ENCODE measurements at regions of chr2 and their contacts with region 1.

Region 1: DNA sequence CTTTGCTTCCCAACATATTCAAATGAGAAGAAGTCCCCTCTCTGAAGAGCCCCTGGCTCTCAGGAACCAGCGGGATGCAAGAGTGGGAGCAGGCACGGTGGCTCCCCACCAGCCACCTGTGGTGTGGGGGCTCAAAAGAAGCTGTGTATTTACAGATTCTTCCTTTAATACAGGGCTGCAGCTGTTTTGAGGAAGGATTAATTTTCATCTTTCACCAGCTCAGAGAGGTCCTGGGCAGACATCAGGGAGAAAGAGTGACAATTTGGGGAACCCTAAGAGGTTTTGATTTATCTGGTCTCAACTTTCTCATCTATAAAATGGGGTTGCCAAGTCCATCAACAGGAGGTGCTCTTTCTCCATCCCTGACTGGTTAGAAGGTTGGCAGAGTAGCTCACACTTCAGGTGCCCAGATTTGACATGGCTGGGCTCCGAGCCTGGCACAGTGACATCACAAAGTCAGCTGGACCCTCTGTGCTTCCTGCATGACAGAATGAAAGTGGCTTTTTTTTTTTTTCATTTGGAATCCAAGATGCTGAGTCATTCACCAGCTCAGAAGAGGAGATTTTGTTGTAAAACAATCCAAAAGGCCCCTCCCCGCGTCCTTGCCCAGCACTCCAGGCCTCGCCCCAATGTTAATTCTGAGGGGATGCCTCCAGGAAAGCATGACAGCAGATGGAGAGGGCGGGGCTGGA is 15.5 kb upstream of the SIX2 start:
- DNase-seq: peak; percentile 90 to 91
- ATAC-seq: peak; percentile 70
- H3K4me3 ChIP-seq: no peak overlapping the region
- H3K27ac ChIP-seq: no peak overlapping the region
- H3K4me1 ChIP-seq: no peaks in the 10 kb centered on the region
- H3K27me3 ChIP-seq: no peaks in the 10 kb centered on the region

Region 2: GRCh38 chr2:45128580-45128997 is 103.8 kb after region 1 on chr2:
- intact Hi-C with region 1: loop called in 1 of 2 experiments (anchors 5 kb)
- DNase-seq: peak in 1 of 2 donors; percentile 66
- ATAC-seq: no peak
- H3K4me3 ChIP-seq: no peak overlapping the region
- H3K27ac ChIP-seq: no peak overlapping the region
- H3K4me1 ChIP-seq: no peaks in the 10 kb centered on the region
- H3K27me3 ChIP-seq: no peaks in the 10 kb centered on the region

Region 3: GRCh38 chr2:45169339-45170190 is 144.8 kb after region 1 on chr2:
- intact Hi-C with region 1: loop called in 1 of 2 experiments (anchors 5 kb)
- DNase-seq: peak; percentile 58 to 79
- ATAC-seq: peak; percentile 73
- H3K4me3 ChIP-seq: peak overlapping the region; percentile 45 to 53
- H3K27ac ChIP-seq: peak overlapping the region in 1 of 2 donors; percentile 22
- H3K4me1 ChIP-seq: peaks cover 0 to 3% of the 10 kb centered on the region in 2 donors
- H3K27me3 ChIP-seq: no peaks in the 10 kb centered on the region

Region 4: DNA sequence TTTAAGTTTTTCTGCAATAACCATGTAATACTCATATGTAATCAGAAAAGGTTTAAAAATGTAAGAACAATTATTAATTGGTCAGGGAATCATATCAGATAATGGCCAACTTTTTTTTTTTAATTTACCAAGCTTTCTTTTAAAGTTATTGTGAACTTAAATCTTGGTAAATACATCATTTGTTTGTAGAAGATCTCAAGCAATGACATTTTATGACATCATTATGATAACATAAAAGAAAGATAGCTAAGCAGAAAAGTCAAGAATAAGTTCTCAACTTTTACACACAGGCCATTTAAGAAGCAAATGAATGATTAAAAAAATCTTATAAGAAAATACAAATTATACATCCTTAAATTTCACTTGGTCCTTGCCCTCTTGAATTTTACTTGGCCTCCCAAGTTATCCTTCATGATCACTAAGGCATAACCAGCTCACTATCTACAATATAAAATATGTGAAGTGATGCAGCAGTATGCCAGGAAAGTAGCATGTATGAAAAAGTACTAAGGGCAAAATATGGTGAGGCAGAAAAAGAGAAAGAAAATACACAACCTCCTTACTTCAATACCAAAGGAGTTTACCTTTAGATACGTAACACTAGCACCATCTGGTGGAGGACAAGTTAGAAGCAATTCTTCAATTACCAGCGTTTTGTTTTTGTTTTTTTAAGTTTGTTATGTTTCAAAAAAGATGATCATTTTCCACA is 469.7 kb after region 1 on chr2:
- intact Hi-C with region 1: loop called (anchors 2 to 5 kb)
- DNase-seq: no peak
- ATAC-seq: no peak
- H3K4me3 ChIP-seq: no peak overlapping the region
- H3K27ac ChIP-seq: no peak overlapping the region
- H3K4me1 ChIP-seq: no peaks in the 10 kb centered on the region
- H3K27me3 ChIP-seq: no peaks in the 10 kb centered on the region